ENCODE measurements at regions of chr18 and their contacts with region 1.

Region 1: GRCh38 chr18:20988726-20989125 is 122.9 kb downstream of the ROCK1 start:
- DNase-seq: no peak
- H3K4me3 ChIP-seq: no peak overlapping the region
- H3K27ac ChIP-seq: no peak overlapping the region
- H3K4me1 ChIP-seq: no peaks in the 10 kb centered on the region
- H3K27me3 ChIP-seq: no peaks in the 10 kb centered on the region
- CTCF ChIP-seq: no peak
- POLR2A ChIP-seq: no peak

Region 2: DNA sequence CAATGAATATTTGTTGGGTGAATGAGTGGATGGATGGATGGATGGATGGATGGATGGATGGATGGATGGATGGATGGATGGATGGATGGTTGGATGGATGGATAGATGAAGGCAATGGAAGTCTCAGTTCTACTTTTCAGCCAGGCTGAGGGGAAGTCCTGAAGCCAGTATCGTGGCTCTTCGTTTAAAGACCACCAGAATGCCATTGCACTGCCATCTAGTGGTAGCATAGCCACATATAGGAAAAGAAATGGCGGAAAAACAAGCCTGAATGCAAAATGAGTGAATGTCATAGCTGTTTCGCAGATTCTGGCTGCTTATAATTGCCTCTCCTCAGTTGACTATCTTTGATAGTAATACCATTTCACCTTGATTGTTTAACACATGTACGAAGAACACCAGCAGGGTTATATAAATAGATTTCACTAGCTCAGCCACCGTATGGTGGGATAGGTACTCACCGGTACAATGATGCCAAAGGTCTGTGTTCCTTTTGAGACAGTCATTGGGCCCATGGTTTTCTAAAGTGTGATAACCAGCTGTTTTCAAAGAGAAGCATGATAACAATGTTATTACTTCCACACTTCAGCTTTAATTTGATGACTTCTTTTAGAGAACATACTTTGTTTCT is 191.0 kb after region 1 on chr18:
- intact Hi-C with region 1: loop called (anchors 10 kb)
- DNase-seq: peak; percentile 77
- H3K4me3 ChIP-seq: no peak overlapping the region
- H3K27ac ChIP-seq: no peak overlapping the region
- H3K4me1 ChIP-seq: no peaks in the 10 kb centered on the region
- H3K27me3 ChIP-seq: no peaks in the 10 kb centered on the region
- CTCF ChIP-seq: peak in 2 of 3 experiments; percentile 71 to 74
- POLR2A ChIP-seq: no peak

Region 3: DNA sequence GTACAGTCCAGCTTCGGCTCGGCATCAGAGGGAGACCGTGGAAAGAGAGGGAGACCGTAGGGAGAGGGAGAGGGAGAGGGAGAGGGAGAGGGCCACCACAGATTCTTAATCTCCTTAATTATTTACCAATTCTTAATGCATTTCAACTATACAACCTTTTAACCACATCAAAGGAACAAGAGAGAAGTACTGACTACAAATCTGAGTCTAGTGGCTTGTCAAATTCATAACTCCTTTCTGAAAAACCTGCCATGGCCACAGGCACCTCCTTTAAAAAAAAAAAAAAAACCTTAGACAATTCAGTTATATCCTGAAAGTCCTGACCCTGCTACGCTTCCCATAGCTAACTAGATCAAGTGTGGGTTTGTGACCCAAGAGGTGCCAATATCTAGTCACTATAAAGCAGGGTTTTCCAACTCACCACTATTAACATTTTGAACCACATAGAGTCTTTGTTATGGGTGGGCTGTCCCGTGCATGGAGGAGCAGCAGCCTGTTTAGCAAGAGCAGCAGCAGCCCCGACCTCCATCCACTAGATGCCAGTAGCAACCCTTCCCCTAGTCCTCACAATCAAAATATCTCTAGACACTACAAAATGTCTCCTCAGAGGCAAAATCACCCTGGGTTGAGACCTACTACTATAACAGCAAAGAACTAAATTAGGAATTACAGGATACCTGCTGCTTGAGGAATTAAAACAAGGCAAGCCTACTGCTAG is 605.0 kb after region 1 on chr18:
- intact Hi-C with region 1: no loop called
- DNase-seq: no peak
- H3K4me3 ChIP-seq: no peak overlapping the region
- H3K27ac ChIP-seq: no peak overlapping the region
- H3K4me1 ChIP-seq: peaks cover 3% of the 10 kb centered on the region
- H3K27me3 ChIP-seq: no peaks in the 10 kb centered on the region
- CTCF ChIP-seq: no peak
- POLR2A ChIP-seq: no peak

Measured in testis (tissue), 5 donors.